ENCODE measurements at regions of chr1 and their contacts with region 1.

Region 1: GRCh38 chr1:246602194-246602593 is 35.9 kb downstream of the CNST start:
- DNase-seq: no peak
- ATAC-seq: peak in 1 of 2 donors; percentile 59
- H3K4me3 ChIP-seq: no peak overlapping the region
- H3K27ac ChIP-seq: peak overlapping the region in 3 of 4 donors; percentile 15 to 29 (median 18)
- H3K4me1 ChIP-seq: peaks cover 22 to 33% of the 10 kb centered on the region in 2 donors
- H3K27me3 ChIP-seq: no peaks in the 10 kb centered on the region
- CTCF ChIP-seq: no peak
- POLR2A ChIP-seq: no peak

Region 2: GRCh38 chr1:246404078-246404477 is 198.1 kb before region 1 on chr1:
- in situ Hi-C with region 1: no loop called
- intact Hi-C with region 1: no loop called
- DNase-seq: no peak
- ATAC-seq: no peak
- H3K4me3 ChIP-seq: no peak overlapping the region
- H3K27ac ChIP-seq: no peak overlapping the region
- H3K4me1 ChIP-seq: no peaks in the 10 kb centered on the region
- H3K27me3 ChIP-seq: no peaks in the 10 kb centered on the region
- CTCF ChIP-seq: no peak
- POLR2A ChIP-seq: no peak

Region 3: DNA sequence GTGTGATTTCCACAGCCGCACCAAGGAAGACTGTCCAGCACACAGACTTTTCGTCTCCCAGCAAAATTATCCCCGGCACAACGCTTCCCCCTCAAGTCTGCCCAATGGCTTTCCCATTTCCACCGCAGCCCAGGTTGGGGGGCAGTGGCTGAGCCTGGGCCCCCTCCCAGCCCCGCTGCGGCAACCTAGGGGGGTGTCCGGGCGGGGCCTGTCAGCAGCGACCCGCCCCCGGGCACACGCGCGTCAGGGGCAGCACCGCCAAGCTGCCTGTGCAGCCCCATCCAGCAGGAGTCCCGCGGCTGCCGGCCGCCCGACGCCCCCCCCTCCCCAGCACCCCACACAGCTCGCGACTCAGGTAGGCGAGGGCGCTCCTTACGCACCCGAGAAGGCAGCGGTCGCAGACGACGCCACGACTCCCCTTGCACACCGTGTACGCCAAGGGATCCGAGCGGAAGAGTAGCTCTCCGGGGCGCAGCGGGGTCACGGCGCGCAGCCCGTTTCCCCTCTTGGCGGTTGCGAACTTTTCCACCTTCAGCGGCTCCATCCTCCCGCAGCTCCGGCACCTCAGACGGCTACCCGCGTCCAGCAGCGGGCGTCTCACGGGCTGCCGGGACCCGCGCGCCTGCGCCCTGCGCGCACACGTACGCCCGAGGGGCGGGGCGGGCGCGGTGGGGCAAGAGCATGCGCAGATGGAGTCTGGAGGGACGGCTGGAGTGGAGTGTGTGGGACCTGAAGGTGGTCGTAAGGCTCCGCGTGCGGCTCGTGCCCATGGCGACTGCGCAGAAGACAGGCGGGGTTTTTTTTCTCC is 95.3 kb before region 1 on chr1 and contains the start of gene SMYD3:
- in situ Hi-C with region 1: no loop called
- intact Hi-C with region 1: loop called (anchors 1 kb)
- DNase-seq: peak; percentile 39 to 46
- ATAC-seq: peak; percentile 95 to 97
- H3K4me3 ChIP-seq: peak within 1 kb of the TSS; percentile 81 to 91 (median 86)
- H3K27ac ChIP-seq: peak within 1 kb of the TSS; percentile 73 to 80 (median 75)
- H3K4me1 ChIP-seq: peaks cover 6 to 10% of the 10 kb centered on the region in 2 donors
- H3K27me3 ChIP-seq: no peaks in the 10 kb centered on the region
- CTCF ChIP-seq: peak in 2 of 5 experiments; percentile 16 to 28
- POLR2A ChIP-seq: peak; percentile 28 to 45
- total RNA-seq, gene SMYD3: 4.4 to 10.3 (median 6.3) TPM

Region 4: GRCh38 chr1:246674049-246674448 is 71.9 kb after region 1 on chr1:
- in situ Hi-C with region 1: no loop called
- intact Hi-C with region 1: no loop called
- DNase-seq: no peak
- ATAC-seq: no peak
- H3K4me3 ChIP-seq: no peak overlapping the region
- H3K27ac ChIP-seq: no peak overlapping the region
- H3K4me1 ChIP-seq: peaks cover 5 to 12% of the 10 kb centered on the region in 2 donors
- H3K27me3 ChIP-seq: no peaks in the 10 kb centered on the region
- CTCF ChIP-seq: no peak
- POLR2A ChIP-seq: no peak

Region 5: GRCh38 chr1:246705368-246705767 is 103.2 kb after region 1 on chr1:
- in situ Hi-C with region 1: no loop called
- intact Hi-C with region 1: no loop called
- DNase-seq: no peak
- ATAC-seq: no peak
- H3K4me3 ChIP-seq: no peak overlapping the region
- H3K27ac ChIP-seq: no peak overlapping the region
- H3K4me1 ChIP-seq: no peaks in the 10 kb centered on the region
- H3K27me3 ChIP-seq: no peaks in the 10 kb centered on the region
- CTCF ChIP-seq: no peak
- POLR2A ChIP-seq: no peak